Left ventricle myocardium superior (tissue), 1 donor: ENCODE measurements at regions of chr2 and their contacts with region 1.

Region 1: DNA sequence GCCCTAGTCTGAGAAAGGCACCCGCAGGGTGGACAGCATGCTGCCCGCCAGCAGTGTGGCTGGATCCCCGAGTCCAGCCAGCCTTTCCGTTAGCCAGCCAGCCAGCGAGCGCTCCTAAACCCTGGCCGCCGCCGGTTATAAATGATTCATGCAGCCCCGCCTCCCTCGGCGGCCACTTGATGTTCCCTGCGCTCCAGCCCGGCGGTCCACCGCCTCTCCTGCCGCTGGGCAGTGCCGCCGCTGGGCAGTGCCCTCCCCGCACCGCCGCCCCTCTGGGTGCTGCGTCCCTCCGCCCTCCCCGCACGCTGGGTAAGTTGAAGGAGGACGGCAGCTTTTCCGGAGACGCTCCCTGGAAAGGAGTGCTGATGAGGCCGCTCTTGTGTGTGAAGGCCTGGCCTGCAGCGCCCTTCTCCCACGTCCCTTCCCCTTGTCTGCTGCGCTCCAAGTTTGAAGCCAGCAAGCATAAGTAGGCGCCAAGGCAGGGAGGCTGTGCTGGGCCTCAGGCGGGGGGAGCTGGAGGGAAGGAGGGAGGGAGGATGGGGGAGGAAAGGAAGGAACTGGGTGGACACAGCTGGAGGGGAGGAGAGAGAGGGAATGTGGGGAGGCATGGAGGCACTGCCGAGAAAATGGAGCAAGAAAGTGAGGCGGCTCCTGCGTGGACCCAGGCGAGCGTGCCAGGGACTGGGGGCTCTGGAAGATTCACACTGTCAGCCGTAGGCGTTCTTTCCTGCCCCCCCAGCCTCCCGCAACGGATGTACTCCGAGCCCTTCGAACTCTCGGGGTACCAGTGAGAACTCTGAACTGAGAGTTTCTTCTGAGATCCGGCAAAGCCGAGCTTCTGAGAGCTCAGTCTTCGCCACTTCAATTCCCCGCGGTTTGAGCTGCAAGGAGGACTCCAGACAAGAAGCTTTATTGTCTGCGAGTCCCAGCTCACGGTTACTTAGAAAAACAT is 131.9 kb downstream of the GLI2 start:
- DNase-seq: peak; percentile 88
- ATAC-seq: peak; percentile 88

Region 2: GRCh38 chr2:120740765-120741524 is 126.6 kb before region 1 on chr2:
- intact Hi-C with region 1: loop called (anchors 10 kb)
- DNase-seq: no peak
- ATAC-seq: peak; percentile 46

Region 3: GRCh38 chr2:120949027-120949956 is 81.7 kb after region 1 on chr2:
- intact Hi-C with region 1: no loop called
- DNase-seq: no peak
- ATAC-seq: peak; percentile 23